ENCODE measurements at regions of chr1 and their contacts with region 1.

Region 1: DNA sequence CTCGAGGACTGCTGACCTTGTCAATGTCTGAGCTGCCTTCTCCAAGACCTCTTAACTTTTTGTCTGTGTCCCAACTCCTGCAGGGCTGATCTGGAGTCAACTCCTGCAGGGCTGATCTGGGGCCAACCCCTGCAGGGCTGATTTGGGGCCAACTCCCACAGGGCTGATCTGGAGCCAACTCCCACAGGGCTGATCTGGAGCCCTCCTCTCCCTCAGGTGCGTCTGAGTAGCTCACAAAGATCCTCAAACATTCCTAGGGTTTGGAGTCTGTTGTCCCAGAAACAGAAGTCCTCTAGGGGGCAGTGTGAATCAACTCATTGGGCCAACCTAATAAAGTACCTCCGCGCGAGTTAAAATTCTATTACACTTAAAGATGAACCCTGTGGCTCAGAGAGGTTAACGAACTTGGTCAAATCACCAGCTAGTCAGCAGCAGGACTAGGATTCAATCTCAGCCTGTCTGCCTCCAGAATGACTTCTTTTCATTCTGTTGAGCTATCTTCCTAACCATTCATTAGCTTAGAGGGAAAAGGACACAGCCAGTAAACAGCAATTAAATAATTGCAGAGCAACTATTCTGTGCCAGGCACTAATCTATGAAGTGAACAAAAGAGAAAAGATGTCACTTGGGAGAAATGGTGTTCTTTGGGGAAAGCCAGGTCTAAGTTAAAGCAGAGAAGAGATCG is 17.2 kb upstream of the RLF start:
- DNase-seq: peak; percentile 84
- ATAC-seq: peak; percentile 60
- H3K4me3 ChIP-seq: no peak overlapping the region
- H3K4me3 Mint-ChIP-seq: no peak overlapping the region
- H3K27ac ChIP-seq: no peak overlapping the region
- H3K27ac Mint-ChIP-seq: no peak overlapping the region
- H3K4me1 ChIP-seq: peaks cover 3 to 6% of the 10 kb centered on the region in 2 donors
- H3K4me1 Mint-ChIP-seq: peaks cover 7% of the 10 kb centered on the region
- H3K27me3 ChIP-seq: peaks cover 0 to 8% (median 0%) of the 10 kb centered on the region in 4 experiments
- H3K27me3 Mint-ChIP-seq: peaks cover 24% of the 10 kb centered on the region
- CTCF ChIP-seq: peak; percentile 85

Region 2: GRCh38 chr1:39653546-39654031 is 490.4 kb before region 1 on chr1:
- CTCF ChIA-PET with region 1: no interaction called
- POLR2A ChIA-PET with region 1: no interaction called
- intact Hi-C with region 1: no loop called
- DNase-seq: peak; percentile 77
- ATAC-seq: peak; percentile 45
- H3K4me3 ChIP-seq: no peak overlapping the region
- H3K4me3 Mint-ChIP-seq: no peak overlapping the region
- H3K27ac ChIP-seq: no peak overlapping the region
- H3K27ac Mint-ChIP-seq: no peak overlapping the region
- H3K4me1 ChIP-seq: peaks cover 4 to 8% of the 10 kb centered on the region in 2 donors
- H3K4me1 Mint-ChIP-seq: peaks cover 4% of the 10 kb centered on the region
- H3K27me3 ChIP-seq: peaks cover 0 to 8% (median 6%) of the 10 kb centered on the region in 4 experiments
- H3K27me3 Mint-ChIP-seq: peaks cover 14% of the 10 kb centered on the region
- CTCF ChIP-seq: peak; percentile 91

Region 3: DNA sequence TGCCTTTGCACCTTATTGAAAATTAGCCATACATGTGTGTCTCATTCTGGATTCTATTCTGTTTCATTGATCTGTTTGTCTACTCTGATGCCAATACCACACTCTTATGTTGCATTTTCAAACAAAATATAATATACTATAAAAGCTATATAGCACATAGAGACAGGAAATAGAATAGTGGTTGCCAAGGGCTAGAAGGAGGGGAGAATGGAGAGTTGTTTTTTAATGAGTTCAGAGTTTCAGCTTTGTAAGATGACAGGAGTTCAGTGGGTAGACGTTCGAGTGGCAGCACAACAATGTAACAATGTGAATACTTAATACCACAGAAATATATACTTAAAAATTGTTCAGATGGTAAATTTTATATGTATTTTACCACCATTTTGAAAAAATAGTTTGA is 34.2 kb after region 1 on chr1:
- CTCF ChIA-PET with region 1: interaction called, 15 read pairs
- POLR2A ChIA-PET with region 1: interaction called, 15 read pairs
- intact Hi-C with region 1: loop called (anchors 1 kb)
- DNase-seq: no peak
- ATAC-seq: no peak
- H3K4me3 ChIP-seq: no peak overlapping the region
- H3K4me3 Mint-ChIP-seq: no peak overlapping the region
- H3K27ac ChIP-seq: no peak overlapping the region
- H3K27ac Mint-ChIP-seq: no peak overlapping the region
- H3K4me1 ChIP-seq: peaks cover 11 to 17% of the 10 kb centered on the region in 2 donors
- H3K4me1 Mint-ChIP-seq: peaks cover 51% of the 10 kb centered on the region
- H3K27me3 ChIP-seq: no peaks in the 10 kb centered on the region
- H3K27me3 Mint-ChIP-seq: no peaks in the 10 kb centered on the region
- CTCF ChIP-seq: no peak

Region 4: DNA sequence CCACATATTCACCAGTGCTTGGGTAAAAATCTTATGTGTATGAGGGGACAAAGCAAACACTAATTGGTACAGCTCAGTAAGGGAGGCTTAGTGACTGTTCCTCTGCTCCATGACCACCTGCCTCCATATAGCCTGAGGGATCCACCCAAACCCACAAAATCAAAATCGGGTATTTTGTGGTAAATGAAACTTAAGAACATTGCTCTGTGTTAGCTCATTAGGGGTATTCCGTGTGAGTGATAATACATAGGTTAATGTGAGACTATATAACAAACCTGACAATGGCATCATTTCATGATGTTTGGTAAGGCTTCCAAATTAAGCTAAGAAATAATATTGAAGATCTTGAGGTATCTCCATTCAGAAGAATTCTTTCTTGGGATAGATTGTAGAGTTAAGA is 147.3 kb after region 1 on chr1:
- CTCF ChIA-PET with region 1: interaction called, 11 read pairs
- POLR2A ChIA-PET with region 1: no interaction called
- intact Hi-C with region 1: no loop called
- DNase-seq: no peak
- ATAC-seq: no peak
- H3K4me3 ChIP-seq: no peak overlapping the region
- H3K4me3 Mint-ChIP-seq: no peak overlapping the region
- H3K27ac ChIP-seq: no peak overlapping the region
- H3K27ac Mint-ChIP-seq: no peak overlapping the region
- H3K4me1 ChIP-seq: peaks cover 9% of the 10 kb centered on the region in 2 donors
- H3K4me1 Mint-ChIP-seq: peaks cover 13% of the 10 kb centered on the region
- H3K27me3 ChIP-seq: no peaks in the 10 kb centered on the region
- H3K27me3 Mint-ChIP-seq: no peaks in the 10 kb centered on the region
- CTCF ChIP-seq: no peak

Region 5: DNA sequence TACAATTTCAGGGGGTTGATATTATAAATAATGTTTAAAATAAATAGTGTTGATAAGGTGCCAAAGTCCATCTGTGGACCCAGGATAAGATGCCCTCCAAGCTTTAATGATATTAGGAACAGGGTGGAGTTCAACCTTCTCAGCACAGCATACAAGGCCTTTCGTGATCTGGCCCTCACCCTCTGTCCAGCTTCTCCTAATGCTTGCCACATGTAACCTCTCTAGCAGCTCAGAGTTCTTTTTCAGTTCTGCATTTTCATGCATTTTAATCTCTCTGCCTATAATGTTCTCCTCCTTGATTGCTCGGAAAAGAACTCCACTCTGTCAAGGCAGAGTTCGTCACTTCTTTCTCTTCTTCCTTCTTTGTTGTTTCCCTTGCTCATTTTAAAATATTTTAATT is 208.1 kb after region 1 on chr1:
- CTCF ChIA-PET with region 1: interaction called, 15 read pairs
- POLR2A ChIA-PET with region 1: no interaction called
- intact Hi-C with region 1: no loop called
- DNase-seq: peak; percentile 58
- ATAC-seq: peak; percentile 95
- H3K4me3 ChIP-seq: no peak overlapping the region
- H3K4me3 Mint-ChIP-seq: peak overlapping the region; percentile 41
- H3K27ac ChIP-seq: peak overlapping the region; percentile 32 to 57
- H3K27ac Mint-ChIP-seq: peak overlapping the region; percentile 87
- H3K4me1 ChIP-seq: peaks cover 37 to 41% of the 10 kb centered on the region in 2 donors
- H3K4me1 Mint-ChIP-seq: peaks cover 52% of the 10 kb centered on the region
- H3K27me3 ChIP-seq: no peaks in the 10 kb centered on the region
- H3K27me3 Mint-ChIP-seq: no peaks in the 10 kb centered on the region
- CTCF ChIP-seq: no peak

Region 6: GRCh38 chr1:40385437-40386358 is 241.7 kb after region 1 on chr1:
- CTCF ChIA-PET with region 1: interaction called, 10 read pairs
- POLR2A ChIA-PET with region 1: no interaction called
- intact Hi-C with region 1: no loop called
- DNase-seq: peak; percentile 94
- ATAC-seq: peak; percentile 73
- H3K4me3 ChIP-seq: peak overlapping the region; percentile 30 to 70 (median 31)
- H3K4me3 Mint-ChIP-seq: peak overlapping the region; percentile 87
- H3K27ac ChIP-seq: peak overlapping the region; percentile 99 to 100
- H3K27ac Mint-ChIP-seq: peak overlapping the region; percentile 97
- H3K4me1 ChIP-seq: peaks cover 94 to 98% of the 10 kb centered on the region in 2 donors
- H3K4me1 Mint-ChIP-seq: peaks cover 91% of the 10 kb centered on the region
- H3K27me3 ChIP-seq: no peaks in the 10 kb centered on the region
- H3K27me3 Mint-ChIP-seq: no peaks in the 10 kb centered on the region
- CTCF ChIP-seq: no peak

Region 7: GRCh38 chr1:40421431-40422384 is 277.7 kb after region 1 on chr1:
- CTCF ChIA-PET with region 1: interaction called, 11 read pairs
- POLR2A ChIA-PET with region 1: no interaction called
- intact Hi-C with region 1: no loop called
- DNase-seq: no peak
- ATAC-seq: no peak
- H3K4me3 ChIP-seq: no peak overlapping the region
- H3K4me3 Mint-ChIP-seq: no peak overlapping the region
- H3K27ac ChIP-seq: peak overlapping the region in 1 of 2 donors; percentile 34
- H3K27ac Mint-ChIP-seq: peak overlapping the region; percentile 74
- H3K4me1 ChIP-seq: peaks cover 19 to 31% of the 10 kb centered on the region in 2 donors
- H3K4me1 Mint-ChIP-seq: peaks cover 44% of the 10 kb centered on the region
- H3K27me3 ChIP-seq: no peaks in the 10 kb centered on the region
- H3K27me3 Mint-ChIP-seq: no peaks in the 10 kb centered on the region
- CTCF ChIP-seq: no peak

Region 8: DNA sequence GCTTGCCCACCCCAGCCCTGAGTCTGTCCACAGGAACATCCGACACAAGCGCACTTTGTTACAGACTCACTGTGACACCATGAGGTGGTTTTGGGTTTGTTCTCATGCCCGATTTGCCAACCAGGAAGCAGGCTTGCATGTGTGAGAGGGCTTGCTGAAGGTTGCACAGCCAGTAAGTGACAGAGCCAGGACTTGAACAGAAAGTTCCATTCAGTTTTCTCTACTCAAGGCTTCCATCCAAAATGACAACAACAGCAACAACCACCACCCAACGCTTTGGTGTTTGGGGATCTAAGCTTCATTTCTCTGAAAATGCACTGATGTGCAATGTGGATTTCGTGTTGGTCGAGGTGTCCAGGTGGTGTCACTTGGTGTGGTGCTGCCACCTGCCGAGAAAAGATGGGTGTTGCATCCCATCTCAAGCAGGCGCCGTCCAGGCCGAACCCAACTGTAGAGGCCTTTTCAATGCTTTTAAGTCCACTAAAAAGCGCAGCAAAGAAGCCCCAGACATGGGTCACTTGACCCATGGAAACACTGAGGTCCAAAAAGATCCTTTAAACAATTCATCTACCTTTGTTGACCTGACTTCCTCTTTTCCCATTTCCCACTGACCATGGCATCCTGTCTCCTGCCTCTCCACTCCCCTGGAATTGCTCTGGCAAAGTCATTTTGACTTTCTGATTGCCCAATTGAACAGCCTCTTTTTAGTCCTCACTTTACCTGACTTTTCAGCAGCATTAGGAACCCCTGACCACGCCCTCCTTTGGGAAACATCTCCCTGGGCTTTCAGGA is 706.0 kb after region 1 on chr1:
- CTCF ChIA-PET with region 1: interaction called, 3 read pairs
- POLR2A ChIA-PET with region 1: no interaction called
- intact Hi-C with region 1: loop called (anchors 5 kb)
- DNase-seq: peak; percentile 85
- ATAC-seq: peak; percentile 98
- H3K4me3 ChIP-seq: no peak overlapping the region
- H3K4me3 Mint-ChIP-seq: peak overlapping the region; percentile 35
- H3K27ac ChIP-seq: no peak overlapping the region
- H3K27ac Mint-ChIP-seq: no peak overlapping the region
- H3K4me1 ChIP-seq: peaks cover 8% of the 10 kb centered on the region in 2 donors
- H3K4me1 Mint-ChIP-seq: peaks cover 11% of the 10 kb centered on the region
- H3K27me3 ChIP-seq: no peaks in the 10 kb centered on the region
- H3K27me3 Mint-ChIP-seq: peaks cover 5% of the 10 kb centered on the region
- CTCF ChIP-seq: peak; percentile 98

Measured in B cell (primary cell).